ENCODE measurements at regions of chr16 and their contacts with region 1.

Region 1: GRCh38 chr16:83356266-83356665 is 451.5 kb upstream of the HSBP1 start:
- DNase-seq: no peak
- ATAC-seq: peak; percentile 56

Region 2: GRCh38 chr16:82761236-82761635 is 595.0 kb before region 1 on chr16:
- intact Hi-C with region 1: loop called (anchors 10 kb)
- DNase-seq: peak; percentile 83
- ATAC-seq: peak; percentile 85

Region 3: GRCh38 chr16:82824408-82824807 is 531.9 kb before region 1 on chr16:
- intact Hi-C with region 1: no loop called
- DNase-seq: no peak
- ATAC-seq: no peak

Region 4: GRCh38 chr16:83247767-83248372 is 108.4 kb before region 1 on chr16:
- intact Hi-C with region 1: loop called (anchors 2 kb)
- DNase-seq: no peak
- ATAC-seq: peak; percentile 63